ENCODE measurements at regions of chr20 and their contacts with region 1.

Region 1: DNA sequence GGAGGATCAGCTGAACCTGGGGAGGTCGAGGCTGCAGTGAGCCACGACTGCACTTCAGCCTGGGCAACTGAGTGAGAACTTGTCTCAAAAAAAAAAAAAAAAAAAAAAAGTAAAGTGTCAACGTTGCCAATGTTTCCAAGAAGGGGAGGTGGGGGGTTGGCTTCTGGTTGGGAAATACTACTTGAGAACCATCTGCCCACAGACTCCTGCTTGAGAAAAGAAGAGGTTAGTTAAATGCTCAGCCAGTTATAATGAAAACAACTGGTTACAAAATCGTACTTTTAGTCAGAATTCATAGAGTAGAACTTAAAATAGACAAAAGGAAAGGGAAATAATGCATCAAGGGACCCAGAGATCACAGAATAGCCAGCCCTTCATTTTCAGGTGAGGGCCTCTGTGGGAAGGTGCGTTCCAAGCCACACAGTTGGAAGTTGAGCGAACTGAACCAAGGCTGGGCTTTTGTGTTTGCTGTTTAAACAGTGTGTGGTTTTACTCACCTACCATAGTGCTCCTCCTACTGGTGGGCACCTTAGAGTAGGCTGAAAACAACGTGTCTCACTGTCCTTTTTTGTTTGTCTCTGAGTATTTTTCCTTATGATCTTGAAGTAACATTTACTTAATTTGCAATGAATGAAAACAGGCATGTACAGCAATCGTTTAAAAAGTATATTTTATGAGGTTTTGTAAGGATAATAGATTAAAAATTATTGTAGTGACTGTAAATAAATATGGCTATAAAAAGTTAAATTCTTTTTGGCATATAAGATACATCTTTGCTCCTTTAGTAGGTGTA is 200.7 kb downstream of the BCAS1 start:
- DNase-seq: peak in 1 of 2 donors; percentile 77
- ATAC-seq: peak; percentile 75 to 90 (median 82)
- H3K4me3 ChIP-seq: no peak overlapping the region
- H3K27ac ChIP-seq: peak overlapping the region in 5 of 10 donors; percentile 2 to 73 (median 25)
- H3K4me1 ChIP-seq: peaks cover 0 to 73% (median 43%) of the 10 kb centered on the region in 9 donors
- H3K27me3 ChIP-seq: no peaks in the 10 kb centered on the region
- CTCF ChIP-seq: peak; percentile 48 to 89 (median 79)

Region 2: GRCh38 chr20:53623454-53624211 is 246.0 kb before region 1 on chr20:
- intact Hi-C with region 1: loop called in 1 of 10 experiments (anchors 5 kb)
- DNase-seq: peak; percentile 40 to 73
- ATAC-seq: peak; percentile 88 to 94 (median 92)
- H3K4me3 ChIP-seq: peak overlapping the region in 9 of 10 donors; percentile 14 to 54 (median 47)
- H3K27ac ChIP-seq: peak overlapping the region; percentile 32 to 97 (median 85)
- H3K4me1 ChIP-seq: peaks cover 0 to 54% (median 36%) of the 10 kb centered on the region in 9 donors
- H3K27me3 ChIP-seq: no peaks in the 10 kb centered on the region
- CTCF ChIP-seq: peak in 2 of 9 donors; percentile 16 to 39

Region 3: GRCh38 chr20:53738039-53738944 is 131.4 kb before region 1 on chr20:
- intact Hi-C with region 1: loop called in 2 of 10 experiments (anchors 5 to 10 kb)
- DNase-seq: peak; percentile 53 to 59
- ATAC-seq: peak; percentile 74 to 92 (median 87)
- H3K4me3 ChIP-seq: peak overlapping the region in 6 of 10 donors; percentile 3 to 43 (median 24)
- H3K27ac ChIP-seq: peak overlapping the region; percentile 53 to 86 (median 79)
- H3K4me1 ChIP-seq: peaks cover 6 to 69% (median 47%) of the 10 kb centered on the region in 9 donors
- H3K27me3 ChIP-seq: no peaks in the 10 kb centered on the region
- CTCF ChIP-seq: no peak

Region 4: GRCh38 chr20:53828682-53829254 is 40.9 kb before region 1 on chr20:
- intact Hi-C with region 1: loop called in 2 of 10 experiments (anchors 2 to 5 kb)
- DNase-seq: peak in 1 of 2 donors; percentile 63
- ATAC-seq: peak; percentile 72 to 93 (median 85)
- H3K4me3 ChIP-seq: peak overlapping the region in 7 of 10 donors; percentile 5 to 43 (median 35)
- H3K27ac ChIP-seq: peak overlapping the region; percentile 28 to 93 (median 84)
- H3K4me1 ChIP-seq: peaks cover 0 to 48% (median 20%) of the 10 kb centered on the region in 9 donors
- H3K27me3 ChIP-seq: no peaks in the 10 kb centered on the region
- CTCF ChIP-seq: peak in 3 of 9 donors; percentile 12 to 40 (median 24)

Region 5: DNA sequence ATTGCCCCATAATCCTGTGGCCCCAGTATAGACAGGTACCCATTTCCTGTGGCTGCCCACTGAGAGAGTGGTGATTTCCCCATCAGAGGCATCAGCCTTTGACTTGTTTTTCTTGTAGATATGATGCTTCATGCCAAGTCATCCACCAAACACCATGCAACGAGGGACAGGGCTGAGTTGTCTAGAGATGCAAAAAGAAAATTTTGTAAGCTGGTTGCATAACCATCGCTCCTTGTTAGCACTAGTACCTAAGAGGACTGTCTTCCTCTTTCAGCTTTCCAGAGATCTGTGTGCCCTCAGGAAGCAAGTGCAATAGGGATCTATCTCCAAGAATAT is 34.0 kb after region 1 on chr20:
- intact Hi-C with region 1: no loop called
- DNase-seq: no peak
- ATAC-seq: no peak
- H3K4me3 ChIP-seq: no peak overlapping the region
- H3K27ac ChIP-seq: peak overlapping the region in 1 of 10 donors; percentile 75
- H3K4me1 ChIP-seq: peaks cover 0 to 78% (median 34%) of the 10 kb centered on the region in 9 donors
- H3K27me3 ChIP-seq: no peaks in the 10 kb centered on the region
- CTCF ChIP-seq: no peak

Region 6: GRCh38 chr20:53915446-53916172 is 45.9 kb after region 1 on chr20:
- intact Hi-C with region 1: loop called in 3 of 10 experiments (anchors 1 to 5 kb)
- DNase-seq: peak; percentile 96 to 98
- ATAC-seq: peak; percentile 87 to 96 (median 92)
- H3K4me3 ChIP-seq: peak overlapping the region; percentile 50 to 76 (median 64)
- H3K27ac ChIP-seq: peak overlapping the region; percentile 65 to 97 (median 89)
- H3K4me1 ChIP-seq: peaks cover 5 to 47% (median 33%) of the 10 kb centered on the region in 9 donors
- H3K27me3 ChIP-seq: no peaks in the 10 kb centered on the region
- CTCF ChIP-seq: peak; percentile 84 to 93 (median 92)

Region 7: DNA sequence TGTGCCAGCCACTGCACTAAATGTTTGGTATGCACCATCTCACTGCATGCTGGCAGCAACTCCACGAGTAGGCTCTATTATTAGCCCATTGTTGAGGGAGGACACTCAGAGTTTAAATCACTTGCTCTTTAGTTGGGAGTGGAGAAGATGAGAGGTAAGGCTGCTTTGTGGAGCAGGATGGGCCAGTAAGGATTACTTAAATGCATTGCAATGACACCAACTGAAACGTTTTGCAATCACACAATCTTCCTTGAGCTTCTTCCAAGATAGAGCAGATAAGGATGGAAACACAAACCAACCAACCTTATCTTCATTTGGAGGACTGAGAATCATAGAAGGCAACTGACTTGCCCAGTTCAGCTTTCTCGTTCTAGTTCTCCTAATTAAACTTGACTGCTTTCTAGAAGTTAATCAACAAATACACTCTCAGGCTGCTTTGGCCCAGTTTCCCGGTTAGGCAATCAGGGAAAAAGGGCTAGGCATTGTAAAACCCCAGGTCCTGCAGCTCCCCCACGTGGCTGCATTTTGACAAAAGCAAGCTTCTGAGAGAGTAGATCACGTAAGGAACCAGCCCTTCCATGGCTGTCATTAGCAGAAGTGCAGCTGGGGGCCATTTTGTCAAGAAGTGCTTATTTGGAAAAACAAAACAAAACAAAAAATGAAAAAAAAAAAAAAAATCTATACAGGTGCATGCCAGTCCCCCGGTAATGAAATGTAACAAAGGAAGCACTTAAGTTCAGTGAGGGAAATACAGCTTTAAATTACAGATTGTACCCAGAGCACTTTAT is 70.1 kb after region 1 on chr20:
- intact Hi-C with region 1: loop called in 1 of 10 experiments (anchors 2 kb)
- DNase-seq: peak; percentile 88 to 95
- ATAC-seq: peak; percentile 87 to 96 (median 94)
- H3K4me3 ChIP-seq: peak overlapping the region in 5 of 10 donors; percentile 17 to 36 (median 21)
- H3K27ac ChIP-seq: peak overlapping the region in 9 of 10 donors; percentile 59 to 85 (median 82)
- H3K4me1 ChIP-seq: peaks cover 7 to 65% (median 55%) of the 10 kb centered on the region in 9 donors
- H3K27me3 ChIP-seq: no peaks in the 10 kb centered on the region
- CTCF ChIP-seq: peak; percentile 60 to 87 (median 80)

Region 8: DNA sequence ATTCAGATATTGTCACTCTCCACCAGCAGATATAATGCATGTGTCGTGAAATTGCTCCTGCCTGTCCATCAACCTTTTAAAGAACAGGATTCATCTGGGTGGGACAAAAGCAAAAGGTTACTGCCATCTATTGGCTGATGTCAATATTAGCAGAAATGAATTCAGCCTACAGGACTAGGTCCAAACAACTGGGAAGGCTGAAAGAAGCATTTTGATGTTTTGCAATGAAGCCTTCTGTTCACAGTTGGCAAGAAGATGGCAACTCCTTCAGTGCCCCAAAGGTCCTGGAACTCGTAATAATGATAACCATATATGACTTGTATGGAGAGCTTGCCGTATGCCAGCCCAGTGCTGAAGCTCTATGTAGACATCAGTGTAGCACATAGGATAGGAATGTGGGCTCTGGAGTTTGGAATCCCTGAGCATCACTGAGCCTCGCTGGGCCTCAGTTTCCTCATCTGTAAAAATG is 193.2 kb after region 1 on chr20:
- intact Hi-C with region 1: no loop called
- DNase-seq: no peak
- ATAC-seq: peak in 5 of 8 donors; percentile 22 to 71 (median 46)
- H3K4me3 ChIP-seq: no peak overlapping the region
- H3K27ac ChIP-seq: peak overlapping the region in 1 of 10 donors; percentile 6
- H3K4me1 ChIP-seq: peaks cover 0 to 14% (median 0%) of the 10 kb centered on the region in 9 donors
- H3K27me3 ChIP-seq: peaks cover 0 to 14% (median 7%) of the 10 kb centered on the region in 7 donors
- CTCF ChIP-seq: peak; percentile 14 to 78 (median 66)

Measured in heart right ventricle (tissue), 16 donors.